Mammary epithelial cell (primary cell): ENCODE measurements at regions of chr7 and their contacts with region 1.

Region 1: DNA sequence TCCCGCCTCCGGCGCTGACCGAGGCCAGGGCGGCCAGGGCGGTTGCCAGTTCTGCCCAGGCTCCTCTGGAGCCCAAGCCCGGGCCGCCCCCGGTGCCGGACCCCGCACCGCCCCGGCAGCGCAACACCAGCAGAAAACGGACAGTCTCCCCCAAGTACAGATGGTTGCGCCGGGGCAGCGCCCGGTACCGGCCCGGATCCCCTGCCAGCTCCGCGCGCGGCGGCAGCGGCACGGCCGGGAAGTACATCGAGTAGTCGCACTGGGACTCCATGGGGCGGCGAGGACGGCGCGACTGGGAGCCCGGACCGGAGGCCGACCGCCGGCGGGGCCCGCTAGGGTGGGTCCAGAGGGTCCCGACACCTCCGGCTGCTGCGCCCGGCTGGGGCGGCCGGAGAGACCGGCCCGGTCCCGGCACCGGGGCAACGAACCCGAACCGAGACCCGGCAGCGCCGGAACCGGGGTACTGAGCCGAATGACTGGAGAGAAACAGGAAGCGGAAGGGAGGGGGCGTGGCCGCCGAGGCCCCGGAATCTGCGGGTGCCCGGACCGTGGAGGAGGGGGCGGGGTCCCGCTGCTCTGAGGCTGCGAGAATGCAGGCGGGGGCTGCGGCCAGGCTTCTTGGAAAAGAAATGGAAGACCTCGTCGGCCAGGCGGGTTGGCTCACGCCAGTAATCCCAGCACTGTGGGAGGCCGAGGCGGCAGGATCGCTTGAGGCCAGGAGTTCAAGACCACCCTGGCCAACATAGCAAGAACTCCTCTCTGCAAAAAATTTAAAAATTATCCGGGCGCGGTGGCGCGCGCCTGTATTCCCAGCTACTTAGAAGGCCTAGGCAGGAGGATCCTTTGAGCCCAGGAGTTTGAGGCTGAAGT is at the start of gene TRAPPC14:
- DNase-seq: peak; percentile 65
- H3K4me3 ChIP-seq: peak within 1 kb of the TSS; percentile 66 to 78 (median 73)
- H3K27ac ChIP-seq: peak within 1 kb of the TSS; percentile 54
- H3K4me1 ChIP-seq: peaks cover 19% of the 10 kb centered on the region
- H3K27me3 ChIP-seq: no peaks in the 10 kb centered on the region
- CTCF ChIP-seq: no peak
- total RNA-seq, gene TRAPPC14: 15.3 to 28.5 TPM

Region 2: GRCh38 chr7:99997545-99998137 is 160.8 kb before region 1 on chr7:
- CTCF ChIA-PET with region 1: no interaction called
- dilution Hi-C with region 1: no loop called
- in situ Hi-C with region 1: no loop called
- intact Hi-C with region 1: no loop called
- DNase-seq: no peak
- H3K4me3 ChIP-seq: peak overlapping the region in 1 of 3 experiments; percentile 21
- H3K27ac ChIP-seq: no peak overlapping the region
- H3K4me1 ChIP-seq: peaks cover 5% of the 10 kb centered on the region
- H3K27me3 ChIP-seq: no peaks in the 10 kb centered on the region
- CTCF ChIP-seq: no peak

Region 3: DNA sequence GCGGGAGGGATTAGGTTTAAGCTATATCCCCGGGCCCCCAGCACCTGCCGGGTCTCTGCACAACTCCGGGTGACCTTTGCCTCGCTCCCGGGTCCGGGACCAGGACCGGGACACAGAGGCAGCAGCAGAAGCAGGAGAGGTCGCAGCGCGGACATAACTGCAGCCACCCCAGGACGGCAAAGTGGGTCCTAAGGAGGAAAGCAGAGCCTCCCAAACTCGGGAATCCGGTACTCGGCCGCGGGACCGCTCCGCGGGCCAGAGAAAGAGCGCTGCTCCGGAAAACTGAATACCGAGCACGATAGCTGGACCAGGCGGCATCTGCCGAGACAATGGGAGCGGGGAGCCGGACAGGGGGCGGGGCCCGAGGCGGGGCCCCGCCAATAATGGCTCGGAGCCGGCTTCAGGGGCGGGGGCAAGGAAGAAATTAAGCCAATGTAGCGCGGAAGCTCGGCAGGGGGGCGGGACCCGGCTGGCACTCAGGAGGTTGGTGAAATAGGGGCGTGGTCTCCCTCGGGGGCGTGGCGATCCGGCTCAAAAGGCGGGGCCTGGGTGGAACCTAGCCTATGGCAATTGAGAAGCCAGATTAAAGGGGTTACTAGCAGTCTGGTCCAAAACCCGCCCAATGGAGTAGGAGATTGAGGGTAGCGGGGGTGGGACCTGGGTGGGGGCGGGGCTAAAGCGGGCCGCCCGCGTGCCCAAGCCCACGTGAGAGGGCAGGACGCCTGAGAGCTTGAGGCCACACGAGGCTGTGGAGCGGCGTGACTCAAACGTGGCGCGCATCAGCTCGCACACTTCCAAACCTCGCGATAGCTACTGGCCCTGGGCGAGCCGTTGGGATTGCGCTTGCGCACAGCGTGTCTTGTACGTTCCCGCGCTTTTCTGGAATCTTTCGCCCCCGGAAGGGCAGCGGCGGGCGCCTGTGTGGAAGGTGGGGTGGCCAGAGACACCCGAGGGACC is 18.9 kb after region 1 on chr7 and contains the starts of genes GPC2 and STAG3:
- CTCF ChIA-PET with region 1: no interaction called
- dilution Hi-C with region 1: no loop called
- in situ Hi-C with region 1: no loop called
- intact Hi-C with region 1: loop called (anchors 2 kb)
- DNase-seq: peak; percentile 95
- H3K4me3 ChIP-seq: peak within 1 kb of the TSS; percentile 54 to 68 (median 60)
- H3K27ac ChIP-seq: no peak within 1 kb of the TSS
- H3K4me1 ChIP-seq: no peaks in the 10 kb centered on the region
- H3K27me3 ChIP-seq: no peaks in the 10 kb centered on the region
- CTCF ChIP-seq: no peak
- total RNA-seq, gene GPC2: 4.0 to 6.4 TPM
- total RNA-seq, gene STAG3: 0.33 to 2.7 TPM

Region 4: GRCh38 chr7:100247152-100247757 is 88.8 kb after region 1 on chr7:
- CTCF ChIA-PET with region 1: no interaction called
- dilution Hi-C with region 1: no loop called
- in situ Hi-C with region 1: no loop called
- intact Hi-C with region 1: no loop called
- DNase-seq: peak; percentile 84
- H3K4me3 ChIP-seq: no peak overlapping the region
- H3K27ac ChIP-seq: no peak overlapping the region
- H3K4me1 ChIP-seq: peaks cover 13% of the 10 kb centered on the region
- H3K27me3 ChIP-seq: no peaks in the 10 kb centered on the region
- CTCF ChIP-seq: no peak